Activated CD4-positive, alpha-beta memory T cell treated with anti-CD3 and anti-CD28 coated beads, Interleukin-2, amount 10 ng/mL, durations not matched to agents 7 days and 5 days (primary cell): ENCODE measurements at regions of chr3 and their contacts with region 1.

Region 1: GRCh38 chr3:143972505-143973255 is 1.1 kb downstream of the DIPK2A start:
- DNase-seq: peak; percentile 74
- H3K4me3 Mint-ChIP-seq: peak overlapping the region; percentile 93
- H3K27ac Mint-ChIP-seq: peak overlapping the region; percentile 90
- H3K4me1 Mint-ChIP-seq: peaks cover 38% of the 10 kb centered on the region
- H3K27me3 Mint-ChIP-seq: peaks cover 17% of the 10 kb centered on the region

Region 2: DNA sequence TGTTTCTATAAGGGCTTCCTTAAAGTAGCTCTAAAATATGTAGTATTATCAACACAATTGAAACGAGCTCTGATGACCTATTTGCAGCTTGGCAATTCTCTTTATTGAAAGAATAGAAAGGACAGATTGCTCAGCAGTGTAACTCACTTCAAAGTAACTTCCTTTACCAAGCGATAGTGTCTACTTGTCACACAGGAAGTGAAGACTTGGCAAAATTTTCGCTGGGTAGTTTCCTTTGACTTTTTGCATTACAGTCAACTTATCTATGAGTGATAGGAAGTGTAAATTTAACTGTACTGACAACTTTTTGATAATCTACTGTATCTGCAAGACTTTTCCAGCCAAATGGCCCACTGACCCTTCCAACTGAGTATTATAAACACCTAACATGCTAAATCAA is 147.2 kb before region 1 on chr3:
- CTCF ChIA-PET with region 1: interaction called, 4 read pairs
- POLR2A ChIA-PET with region 1: interaction called, 19 read pairs
- DNase-seq: peak; percentile 26
- H3K4me3 Mint-ChIP-seq: peak overlapping the region; percentile 18
- H3K27ac Mint-ChIP-seq: peak overlapping the region; percentile 78
- H3K4me1 Mint-ChIP-seq: peaks cover 56% of the 10 kb centered on the region
- H3K27me3 Mint-ChIP-seq: no peaks in the 10 kb centered on the region

Region 3: GRCh38 chr3:143847787-143848631 is 124.7 kb before region 1 on chr3 and contains the start of gene SLC9A9:
- CTCF ChIA-PET with region 1: interaction called, 20 read pairs
- POLR2A ChIA-PET with region 1: interaction called, 33 read pairs
- DNase-seq: peak; percentile 53
- H3K4me3 Mint-ChIP-seq: peak within 1 kb of the TSS; percentile 95
- H3K27ac Mint-ChIP-seq: peak within 1 kb of the TSS; percentile 93
- H3K4me1 Mint-ChIP-seq: peaks cover 53% of the 10 kb centered on the region
- H3K27me3 Mint-ChIP-seq: no peaks in the 10 kb centered on the region
- total RNA-seq, gene SLC9A9: 16.9 to 18.5 TPM

Region 4: DNA sequence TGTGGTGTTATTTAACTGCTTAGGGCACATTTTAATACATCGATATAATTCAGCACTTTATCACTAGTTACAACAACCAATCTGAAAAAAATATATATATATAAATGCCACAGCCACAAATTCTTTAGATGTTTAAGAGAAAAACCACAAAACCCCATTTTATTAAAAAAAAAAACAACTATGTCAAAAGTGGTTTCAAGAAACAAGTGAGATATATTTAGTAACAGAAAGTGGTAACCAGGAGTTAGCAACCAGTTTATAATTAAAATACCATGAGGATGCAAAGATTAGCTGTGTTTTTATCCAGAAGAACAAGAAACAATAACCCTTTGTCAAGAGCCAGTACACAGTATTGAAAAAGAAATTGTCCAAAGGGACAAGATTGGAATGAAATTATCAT is 15.8 kb before region 1 on chr3:
- CTCF ChIA-PET with region 1: interaction called, 9 read pairs
- POLR2A ChIA-PET with region 1: interaction called, 15 read pairs
- DNase-seq: no peak
- H3K4me3 Mint-ChIP-seq: no peak overlapping the region
- H3K27ac Mint-ChIP-seq: no peak overlapping the region
- H3K4me1 Mint-ChIP-seq: peaks cover 6% of the 10 kb centered on the region
- H3K27me3 Mint-ChIP-seq: peaks cover 23% of the 10 kb centered on the region